ENCODE measurements at regions of chr10 and their contacts with region 1.

Region 1: GRCh38 chr10:104291439-104291951 is 22.5 kb downstream of the GSTO2 start:
- DNase-seq: peak; percentile 86 to 91
- H3K4me3 ChIP-seq: no peak overlapping the region
- H3K4me3 Mint-ChIP-seq: peak overlapping the region; percentile 48
- H3K27ac Mint-ChIP-seq: no peak overlapping the region
- H3K4me1 ChIP-seq: peaks cover 13% of the 10 kb centered on the region
- H3K4me1 Mint-ChIP-seq: peaks cover 7% of the 10 kb centered on the region
- H3K27me3 ChIP-seq: no peaks in the 10 kb centered on the region
- H3K27me3 Mint-ChIP-seq: peaks cover 3% of the 10 kb centered on the region
- CTCF ChIP-seq: peak; percentile 98 to 100

Region 2: GRCh38 chr10:104049497-104050250 is 241.8 kb before region 1 on chr10:
- CTCF ChIA-PET with region 1: no interaction called
- POLR2A ChIA-PET with region 1: no interaction called
- intact Hi-C with region 1: no loop called
- DNase-seq: no peak
- H3K4me3 ChIP-seq: no peak overlapping the region
- H3K4me3 Mint-ChIP-seq: no peak overlapping the region
- H3K27ac Mint-ChIP-seq: no peak overlapping the region
- H3K4me1 ChIP-seq: peaks cover 13% of the 10 kb centered on the region; the same call in 1 of the 2 replicates
- H3K4me1 Mint-ChIP-seq: no peaks in the 10 kb centered on the region
- H3K27me3 ChIP-seq: no peaks in the 10 kb centered on the region
- H3K27me3 Mint-ChIP-seq: no peaks in the 10 kb centered on the region
- CTCF ChIP-seq: no peak

Region 3: GRCh38 chr10:104218751-104219150 is 72.7 kb before region 1 on chr10:
- CTCF ChIA-PET with region 1: no interaction called
- POLR2A ChIA-PET with region 1: no interaction called
- intact Hi-C with region 1: no loop called
- DNase-seq: no peak
- H3K4me3 ChIP-seq: no peak overlapping the region
- H3K4me3 Mint-ChIP-seq: no peak overlapping the region
- H3K27ac Mint-ChIP-seq: no peak overlapping the region
- H3K4me1 ChIP-seq: peaks cover 20% of the 10 kb centered on the region
- H3K4me1 Mint-ChIP-seq: no peaks in the 10 kb centered on the region
- H3K27me3 ChIP-seq: no peaks in the 10 kb centered on the region
- H3K27me3 Mint-ChIP-seq: no peaks in the 10 kb centered on the region
- CTCF ChIP-seq: no peak

Region 4: GRCh38 chr10:104337974-104338735 is 46.7 kb after region 1 on chr10 and contains the start of gene ITPRIP:
- CTCF ChIA-PET with region 1: interaction called, 3 read pairs
- POLR2A ChIA-PET with region 1: no interaction called
- intact Hi-C with region 1: loop called (anchors 2 kb)
- DNase-seq: peak; percentile 59 to 69
- H3K4me3 ChIP-seq: peak within 1 kb of the TSS; percentile 76
- H3K4me3 Mint-ChIP-seq: peak within 1 kb of the TSS; percentile 99
- H3K27ac Mint-ChIP-seq: peak within 1 kb of the TSS; percentile 99
- H3K4me1 ChIP-seq: peaks cover 22% of the 10 kb centered on the region
- H3K4me1 Mint-ChIP-seq: peaks cover 17% of the 10 kb centered on the region
- H3K27me3 ChIP-seq: no peaks in the 10 kb centered on the region
- H3K27me3 Mint-ChIP-seq: no peaks in the 10 kb centered on the region
- CTCF ChIP-seq: peak in 1 of 2 experiments; percentile 46
- total RNA-seq, gene ITPRIP: 3.1 and 3.4 TPM in 2 replicates

Region 5: DNA sequence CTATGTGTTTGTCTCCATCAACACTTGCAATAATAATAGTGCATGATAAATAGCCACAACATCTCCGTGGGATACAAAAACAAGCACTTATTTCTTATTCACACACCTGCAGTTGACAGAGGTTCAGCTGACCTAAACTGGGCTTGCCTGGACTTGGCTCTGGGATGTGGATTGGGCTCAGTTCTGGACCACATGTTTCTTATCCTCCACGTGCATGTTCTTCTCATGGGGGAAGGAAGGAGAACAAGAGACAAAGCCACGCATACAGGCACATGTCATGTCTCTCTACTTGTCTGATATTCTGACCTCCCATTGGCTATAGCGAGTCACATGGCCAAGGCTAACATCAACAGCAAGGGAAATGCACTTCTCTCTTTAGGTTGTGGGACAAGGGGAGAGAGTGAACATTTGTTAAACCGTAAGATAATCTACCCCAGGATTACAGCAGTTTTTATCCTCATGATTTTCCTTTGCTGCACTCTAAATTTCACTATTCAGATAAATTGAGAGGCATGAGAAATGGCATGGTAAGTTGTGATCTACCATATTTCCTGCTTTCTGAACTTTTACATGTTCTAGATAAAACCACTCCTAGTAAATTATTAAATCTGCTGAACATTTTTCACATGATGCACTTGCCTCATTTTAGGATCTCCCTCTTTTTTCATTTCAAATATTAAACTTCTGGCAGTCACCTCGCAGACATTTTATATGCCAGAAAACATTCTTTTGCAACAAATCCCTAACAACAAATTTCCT is 95.8 kb after region 1 on chr10:
- CTCF ChIA-PET with region 1: no interaction called
- POLR2A ChIA-PET with region 1: no interaction called
- intact Hi-C with region 1: loop called (anchors 1 kb)
- DNase-seq: no peak
- H3K4me3 ChIP-seq: no peak overlapping the region
- H3K4me3 Mint-ChIP-seq: no peak overlapping the region
- H3K27ac Mint-ChIP-seq: no peak overlapping the region
- H3K4me1 ChIP-seq: peaks cover 14% of the 10 kb centered on the region
- H3K4me1 Mint-ChIP-seq: peaks cover 12% of the 10 kb centered on the region
- H3K27me3 ChIP-seq: no peaks in the 10 kb centered on the region
- H3K27me3 Mint-ChIP-seq: peaks cover 11% of the 10 kb centered on the region
- CTCF ChIP-seq: no peak

Measured in Caco-2 (cell line).